Activated CD4-positive, alpha-beta memory T cell treated with anti-CD3 and anti-CD28 coated beads for 36 hours (primary cell): ENCODE measurements at regions of chr9 and their contacts with region 1.

Region 1: GRCh38 chr9:84261082-84261746 is 79.3 kb downstream of the SLC28A3 start:
- DNase-seq: peak; percentile 72
- H3K4me3 Mint-ChIP-seq: no peak overlapping the region
- H3K27ac Mint-ChIP-seq: no peak overlapping the region
- H3K4me1 Mint-ChIP-seq: peaks cover 7% of the 10 kb centered on the region
- H3K27me3 Mint-ChIP-seq: peaks cover 5% of the 10 kb centered on the region

Region 2: GRCh38 chr9:83920927-83921707 is 340.1 kb before region 1 on chr9 and contains the start of gene KIF27:
- CTCF ChIA-PET with region 1: interaction called, 5 read pairs
- POLR2A ChIA-PET with region 1: interaction called, 3 read pairs
- intact Hi-C with region 1: loop called (anchors 1 kb)
- DNase-seq: peak; percentile 99
- H3K4me3 Mint-ChIP-seq: peak within 1 kb of the TSS; percentile 80
- H3K27ac Mint-ChIP-seq: peak within 1 kb of the TSS; percentile 91
- H3K4me1 Mint-ChIP-seq: peaks cover 10% of the 10 kb centered on the region
- H3K27me3 Mint-ChIP-seq: no peaks in the 10 kb centered on the region
- total RNA-seq, gene KIF27: 2.6 to 3.0 TPM

Region 3: GRCh38 chr9:84241817-84242373 is 19.3 kb before region 1 on chr9:
- CTCF ChIA-PET with region 1: interaction called, 12 read pairs
- POLR2A ChIA-PET with region 1: no interaction called
- intact Hi-C with region 1: no loop called
- DNase-seq: no peak
- H3K4me3 Mint-ChIP-seq: no peak overlapping the region
- H3K27ac Mint-ChIP-seq: no peak overlapping the region
- H3K4me1 Mint-ChIP-seq: no peaks in the 10 kb centered on the region
- H3K27me3 Mint-ChIP-seq: peaks cover 2% of the 10 kb centered on the region

Region 4: DNA sequence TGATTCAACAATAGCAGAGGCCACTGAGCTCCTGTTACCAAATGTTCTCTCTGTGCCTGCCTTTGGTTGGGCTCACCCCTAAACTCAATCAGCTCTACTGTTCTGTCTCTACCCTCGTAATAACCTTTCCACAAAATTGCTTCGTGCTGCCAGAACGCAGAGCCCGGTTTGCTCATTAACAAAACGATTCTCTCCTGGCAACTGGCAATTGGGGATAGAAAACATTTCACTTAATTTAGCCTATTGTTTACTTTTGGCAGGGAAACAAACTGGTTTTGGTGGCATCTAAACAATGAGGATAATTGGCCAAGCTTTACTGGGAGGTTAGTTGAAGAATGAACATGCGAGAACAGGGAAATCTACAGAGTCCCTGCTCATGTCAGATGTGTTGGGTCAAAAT is 22.7 kb after region 1 on chr9:
- CTCF ChIA-PET with region 1: interaction called, 11 read pairs
- POLR2A ChIA-PET with region 1: no interaction called
- intact Hi-C with region 1: no loop called
- DNase-seq: no peak
- H3K4me3 Mint-ChIP-seq: no peak overlapping the region
- H3K27ac Mint-ChIP-seq: no peak overlapping the region
- H3K4me1 Mint-ChIP-seq: peaks cover 8% of the 10 kb centered on the region
- H3K27me3 Mint-ChIP-seq: no peaks in the 10 kb centered on the region

Region 5: GRCh38 chr9:84315278-84315877 is 54.2 kb after region 1 on chr9:
- CTCF ChIA-PET with region 1: interaction called, 12 read pairs
- POLR2A ChIA-PET with region 1: no interaction called
- intact Hi-C with region 1: loop called (anchors 1 kb)
- DNase-seq: peak; percentile 70
- H3K4me3 Mint-ChIP-seq: no peak overlapping the region
- H3K27ac Mint-ChIP-seq: no peak overlapping the region
- H3K4me1 Mint-ChIP-seq: peaks cover 6% of the 10 kb centered on the region
- H3K27me3 Mint-ChIP-seq: no peaks in the 10 kb centered on the region

Region 6: GRCh38 chr9:84435902-84436301 is 174.7 kb after region 1 on chr9:
- CTCF ChIA-PET with region 1: no interaction called
- POLR2A ChIA-PET with region 1: no interaction called
- intact Hi-C with region 1: no loop called
- DNase-seq: no peak
- H3K4me3 Mint-ChIP-seq: no peak overlapping the region
- H3K27ac Mint-ChIP-seq: no peak overlapping the region
- H3K4me1 Mint-ChIP-seq: no peaks in the 10 kb centered on the region
- H3K27me3 Mint-ChIP-seq: no peaks in the 10 kb centered on the region

Region 7: DNA sequence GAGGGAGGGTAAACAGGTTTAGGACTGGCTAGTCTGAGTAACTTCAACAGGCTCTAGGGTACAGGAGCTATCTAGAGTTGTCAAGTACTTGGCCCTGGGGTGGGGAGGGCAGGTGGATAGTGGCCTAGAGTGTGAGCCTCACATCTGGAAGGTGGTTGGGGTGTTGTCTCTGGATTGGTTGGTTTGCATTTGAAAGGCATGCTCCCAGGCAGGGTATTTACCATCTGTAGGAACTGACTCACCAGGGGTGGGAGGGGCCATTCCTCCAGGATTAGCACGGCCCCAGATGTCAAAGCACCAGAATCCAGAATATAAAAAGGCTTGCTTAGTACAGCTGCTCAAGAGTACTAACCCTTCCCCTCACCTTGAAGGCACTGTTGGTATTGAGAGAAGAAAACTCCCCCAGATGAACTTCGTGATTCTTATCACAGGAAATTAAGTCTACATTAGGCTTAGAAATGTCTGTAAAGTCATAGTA is 601.6 kb after region 1 on chr9:
- CTCF ChIA-PET with region 1: no interaction called
- POLR2A ChIA-PET with region 1: no interaction called
- intact Hi-C with region 1: no loop called
- DNase-seq: no peak
- H3K4me3 Mint-ChIP-seq: no peak overlapping the region
- H3K27ac Mint-ChIP-seq: no peak overlapping the region
- H3K4me1 Mint-ChIP-seq: peaks cover 2% of the 10 kb centered on the region
- H3K27me3 Mint-ChIP-seq: peaks cover 1% of the 10 kb centered on the region